Astrocyte of the cerebellum (primary cell): ENCODE measurements at regions of chr7 and their contacts with region 1.

Region 1: DNA sequence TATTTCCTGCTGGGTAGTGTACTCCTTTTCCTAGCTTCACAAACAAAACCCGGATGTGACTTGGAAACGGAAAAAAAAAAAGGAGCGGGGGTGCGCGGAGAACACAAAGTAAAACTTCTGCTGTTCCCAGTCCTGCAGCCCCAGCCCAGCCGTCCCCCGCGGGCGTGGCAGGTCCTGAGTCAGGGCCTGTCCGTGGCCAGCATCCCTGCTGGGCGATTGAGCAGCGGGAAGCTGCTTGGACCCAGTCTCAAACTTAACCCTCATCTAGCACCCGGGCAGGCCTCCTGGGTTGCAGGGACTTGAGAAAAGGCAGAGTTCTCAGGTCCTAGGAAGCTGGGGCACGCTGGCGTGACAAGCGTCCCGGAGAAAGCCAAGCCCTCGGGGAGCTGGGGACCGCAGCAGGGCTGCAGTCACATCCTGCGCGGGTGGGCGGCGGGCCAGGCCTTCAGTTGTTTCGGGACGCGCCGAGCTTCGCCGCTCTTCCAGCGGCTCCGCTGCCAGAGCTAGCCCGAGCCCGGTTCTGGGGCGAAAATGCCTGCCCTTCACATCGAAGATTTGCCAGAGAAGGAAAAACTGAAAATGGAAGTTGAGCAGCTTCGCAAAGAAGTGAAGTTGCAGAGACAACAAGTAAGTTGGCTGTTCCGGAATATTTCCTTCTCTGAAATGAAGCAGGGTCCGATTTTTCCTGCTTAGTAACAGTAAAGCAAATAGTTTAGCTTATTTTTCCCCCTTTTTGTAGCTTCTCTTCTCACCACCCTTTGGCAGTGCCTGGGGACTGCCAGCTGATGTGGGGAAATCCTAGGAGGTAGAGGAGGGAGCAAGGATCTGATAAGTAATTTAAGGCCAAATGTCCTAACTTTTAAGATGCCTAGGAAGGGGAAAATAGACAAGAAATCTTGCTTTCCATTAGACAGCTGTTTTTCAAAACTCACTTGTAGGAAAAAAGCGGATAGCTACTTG is at the start of gene GNG11:
- DNase-seq: no peak
- H3K4me3 ChIP-seq: peak within 1 kb of the TSS; percentile 71
- CTCF ChIP-seq: no peak

Region 2: DNA sequence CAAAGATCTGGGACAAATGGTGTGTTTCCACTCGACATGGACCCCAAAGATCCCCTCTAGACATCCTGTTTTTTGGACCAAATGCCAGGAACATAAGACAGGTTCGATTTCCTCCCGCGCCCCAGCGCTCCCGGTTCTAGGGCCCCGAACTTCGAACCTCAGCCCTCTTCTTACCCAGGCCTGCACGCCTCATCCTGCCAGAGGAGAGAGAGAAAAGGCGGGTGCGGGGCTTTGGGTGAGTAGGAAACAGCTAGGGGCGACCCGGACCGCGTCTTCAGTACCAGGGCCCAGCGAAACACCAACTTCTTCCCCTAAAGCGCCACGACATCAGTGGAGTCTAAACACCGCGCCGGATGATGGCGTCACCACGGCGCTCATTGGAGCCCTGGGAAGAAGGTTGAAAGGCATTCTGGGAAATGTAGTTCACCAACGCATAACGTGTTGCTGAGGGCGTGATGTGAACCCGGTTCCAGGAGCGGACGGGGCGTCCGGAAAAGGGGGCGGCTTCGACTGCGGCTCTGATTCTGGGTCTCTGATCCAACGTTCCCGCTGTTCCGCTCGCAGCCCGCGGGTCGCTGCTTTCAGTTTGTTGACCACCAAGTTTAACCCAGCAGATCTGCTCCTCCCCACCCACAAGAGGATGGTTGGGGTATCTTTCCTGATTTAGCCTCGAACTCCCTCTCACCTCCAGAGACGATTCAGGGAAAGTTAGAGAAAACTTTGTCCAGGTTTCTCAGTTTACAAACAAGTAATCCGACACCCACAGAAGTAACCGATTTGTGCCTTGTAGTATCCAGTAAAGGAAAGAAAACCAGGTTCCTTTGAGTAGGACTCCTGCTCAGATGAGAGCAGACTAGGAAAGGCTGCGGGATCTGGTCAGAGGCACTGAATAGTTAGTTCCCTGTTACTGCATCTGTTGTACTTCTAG is 82.4 kb after region 1 on chr7 and contains the start of gene BET1:
- in situ Hi-C with region 1: loop called (anchors 5 kb)
- DNase-seq: peak; percentile 96
- H3K4me3 ChIP-seq: peak within 1 kb of the TSS; percentile 90
- CTCF ChIP-seq: no peak